Prostate gland (tissue), 2 donors: ENCODE measurements at regions of chr18 and their contacts with region 1.

Region 1: DNA sequence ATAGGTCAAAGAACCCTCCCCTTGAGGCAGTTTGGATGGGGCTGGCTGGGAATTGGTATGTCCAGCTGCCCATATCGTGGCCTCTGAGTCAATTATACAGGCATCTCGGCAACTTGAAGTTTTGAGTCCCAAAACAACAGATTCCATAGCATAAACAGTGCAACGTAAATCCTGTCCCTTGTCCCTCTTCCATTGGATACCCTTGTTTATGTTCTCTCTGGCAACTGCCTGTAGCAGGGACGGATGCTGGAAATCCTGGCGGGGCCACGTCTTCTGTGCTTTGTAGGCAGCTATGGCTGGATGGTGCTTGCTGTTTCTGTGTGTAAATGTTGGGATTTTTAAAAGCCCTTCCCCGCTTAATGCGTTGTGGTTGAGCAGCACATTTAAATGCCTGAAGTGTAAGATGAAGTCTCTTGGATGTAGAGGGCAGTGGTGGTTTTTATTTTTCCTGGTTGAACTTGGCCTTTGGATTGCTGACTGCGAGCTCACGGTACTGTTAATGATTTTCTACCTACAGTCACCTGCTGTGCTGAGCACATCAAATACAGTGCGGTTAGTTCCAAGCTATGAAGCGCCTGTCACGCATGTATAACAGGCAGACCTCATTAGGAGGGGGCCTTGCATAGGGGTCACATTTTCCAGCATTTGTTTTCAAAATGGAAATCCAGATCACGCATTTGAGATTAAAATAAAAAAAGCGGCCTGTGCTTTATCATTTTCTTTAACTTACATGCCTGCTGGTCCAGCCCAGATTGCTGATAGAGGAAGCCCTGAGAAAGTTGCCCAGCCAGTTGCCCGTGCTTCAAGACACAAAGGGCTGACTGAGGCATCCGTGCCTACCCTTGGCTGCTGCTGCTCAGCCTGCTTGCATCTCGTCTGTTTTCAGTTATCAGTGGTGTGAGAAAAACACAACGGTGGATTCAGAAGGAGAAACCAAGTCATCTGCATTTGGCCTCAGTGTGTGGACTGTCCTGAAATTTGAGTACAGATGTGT is 84.7 kb downstream of the NEDD4L start:
- DNase-seq: no peak
- H3K4me3 ChIP-seq: no peak overlapping the region
- H3K27ac ChIP-seq: no peak overlapping the region
- H3K4me1 ChIP-seq: no peaks in the 10 kb centered on the region
- H3K27me3 ChIP-seq: no peaks in the 10 kb centered on the region
- CTCF ChIP-seq: no peak
- POLR2A ChIP-seq: no peak

Region 2: DNA sequence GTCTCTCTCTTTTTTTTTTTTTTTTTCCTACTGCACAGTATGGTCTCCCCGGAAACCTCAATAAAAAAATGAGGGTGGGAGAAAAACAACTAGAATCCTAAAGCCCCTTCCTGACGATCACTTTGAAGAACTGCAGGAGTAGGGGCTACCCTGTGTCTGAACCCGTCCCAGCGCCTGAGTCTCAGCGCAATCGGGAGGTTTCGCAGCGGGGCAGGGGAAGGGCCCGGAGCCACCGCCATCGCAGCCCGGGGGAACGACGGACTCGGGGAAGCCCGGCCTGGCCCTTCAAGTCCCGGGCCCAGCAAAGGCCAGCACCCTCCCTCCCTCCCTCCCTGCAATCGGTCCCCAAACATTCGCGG is 507.5 kb before region 1 on chr18:
- intact Hi-C with region 1: loop called (anchors 10 kb)
- DNase-seq: no peak
- H3K4me3 ChIP-seq: peak overlapping the region; percentile 74 to 83
- H3K27ac ChIP-seq: peak overlapping the region; percentile 87 to 88
- H3K4me1 ChIP-seq: peaks cover 4% of the 10 kb centered on the region
- H3K27me3 ChIP-seq: no peaks in the 10 kb centered on the region
- CTCF ChIP-seq: no peak
- POLR2A ChIP-seq: no peak

Region 3: GRCh38 chr18:57737400-57738060 is 391.1 kb before region 1 on chr18:
- intact Hi-C with region 1: no loop called
- DNase-seq: peak; percentile 57
- H3K4me3 ChIP-seq: no peak overlapping the region
- H3K27ac ChIP-seq: peak overlapping the region in 1 of 2 donors; percentile 38
- H3K4me1 ChIP-seq: peaks cover 3% of the 10 kb centered on the region
- H3K27me3 ChIP-seq: no peaks in the 10 kb centered on the region
- CTCF ChIP-seq: no peak
- POLR2A ChIP-seq: no peak

Region 4: GRCh38 chr18:58080451-58080850 is 48.2 kb before region 1 on chr18:
- intact Hi-C with region 1: no loop called
- DNase-seq: no peak
- H3K4me3 ChIP-seq: no peak overlapping the region
- H3K27ac ChIP-seq: peak overlapping the region; percentile 59 to 61
- H3K4me1 ChIP-seq: no peaks in the 10 kb centered on the region
- H3K27me3 ChIP-seq: no peaks in the 10 kb centered on the region
- CTCF ChIP-seq: no peak
- POLR2A ChIP-seq: no peak